HepG2 (cell line): ENCODE measurements at regions of chr20 and their contacts with region 1.

Region 1: DNA sequence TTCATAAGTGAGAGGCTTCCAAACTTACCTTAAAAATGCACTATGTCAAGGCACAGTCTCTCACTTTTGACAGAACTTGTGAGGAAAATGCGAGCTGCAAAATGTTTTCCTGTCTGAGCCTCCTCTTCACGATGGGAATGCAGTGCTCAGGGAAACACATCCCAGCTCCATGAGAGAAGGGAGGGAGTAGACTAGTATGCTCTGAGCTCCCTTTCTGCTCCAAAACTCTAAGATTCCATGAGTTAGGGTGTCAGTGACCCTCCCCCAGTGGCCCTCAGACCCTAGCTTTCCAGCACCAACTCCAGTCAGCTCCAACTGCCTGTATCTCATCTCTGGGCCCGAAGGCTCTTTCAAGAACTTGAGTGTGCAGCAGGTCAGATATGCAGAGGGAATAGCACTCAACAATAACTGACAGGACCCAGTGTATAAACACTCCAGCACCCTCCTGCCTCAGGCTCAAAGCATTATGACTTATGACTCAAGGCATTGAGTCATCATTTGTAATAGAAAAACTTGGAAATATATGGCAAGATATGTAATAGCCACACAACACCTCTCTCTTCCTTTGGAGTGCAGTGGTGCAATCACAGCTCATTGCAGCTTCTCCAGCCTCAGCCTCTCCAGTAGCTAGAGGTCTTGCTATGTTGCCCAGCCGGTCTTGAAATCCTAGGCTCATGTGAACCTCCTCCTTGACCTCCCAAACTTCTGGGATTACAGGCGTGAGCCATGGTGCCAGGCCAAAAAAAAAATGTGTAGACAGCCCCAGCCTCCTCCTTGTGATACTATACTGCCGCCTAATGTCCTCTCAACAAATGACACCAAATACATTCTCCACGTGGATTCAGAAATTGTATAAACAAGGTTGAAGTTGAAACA is 16.7 kb upstream of the ENTPD6 start:
- DNase-seq: peak; percentile 67
- ATAC-seq: peak; percentile 79
- H3K4me3 ChIP-seq: no peak overlapping the region
- H3K27ac ChIP-seq: no peak overlapping the region
- H3K4me1 ChIP-seq: peaks cover 47% of the 10 kb centered on the region
- H3K27me3 ChIP-seq: no peaks in the 10 kb centered on the region
- CTCF ChIP-seq: peak; percentile 98
- EP300 ChIP-seq: no peak
- POLR2A ChIP-seq: no peak
- RAD21 ChIP-seq: peak; percentile 97

Region 2: DNA sequence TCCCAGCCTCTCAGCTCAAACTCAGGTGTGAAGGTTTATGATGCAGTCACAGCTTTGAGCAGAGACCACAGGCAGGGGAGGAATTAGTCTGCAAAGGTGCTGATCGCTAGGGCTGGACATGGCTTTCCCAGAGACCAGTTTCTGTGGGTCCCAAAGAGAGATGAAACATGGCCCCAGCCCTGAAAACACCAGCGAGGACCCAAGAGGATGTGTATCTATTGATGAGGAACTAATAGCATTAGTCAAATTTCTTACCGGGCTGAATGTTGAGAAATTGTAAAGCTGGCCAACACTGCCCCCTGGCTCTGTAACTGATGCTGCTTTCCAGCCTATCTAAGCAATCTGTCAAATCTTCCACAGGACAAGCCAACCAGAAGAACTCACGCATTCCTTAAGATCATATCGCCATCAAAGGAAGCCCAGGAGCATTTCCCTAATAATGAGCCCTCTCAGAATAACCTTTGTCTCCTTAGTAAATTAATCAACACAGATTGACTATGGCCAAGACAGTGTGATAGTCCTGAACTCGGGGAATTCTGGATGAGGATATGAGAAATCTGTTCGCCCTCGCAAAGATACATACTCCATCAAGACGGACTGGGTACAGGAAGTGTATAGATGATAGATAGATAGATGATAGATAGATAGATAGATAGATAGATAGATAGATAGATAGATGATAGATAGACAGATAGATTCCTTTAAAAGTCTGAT is 113.0 kb before region 1 on chr20:
- CTCF ChIA-PET with region 1: interaction called, 5 read pairs
- POLR2A ChIA-PET with region 1: no interaction called
- in situ Hi-C with region 1: no loop called
- intact Hi-C with region 1: loop called (anchors 1 kb)
- DNase-seq: peak; percentile 65
- ATAC-seq: peak; percentile 64
- H3K4me3 ChIP-seq: peak overlapping the region in 2 of 3 experiments; percentile 1 to 24; a peak in 1 of 6 replicates
- H3K27ac ChIP-seq: no peak overlapping the region
- H3K4me1 ChIP-seq: peaks cover 63% of the 10 kb centered on the region
- H3K27me3 ChIP-seq: peaks cover 0 to 6% of the 10 kb centered on the region in 2 experiments; a peak in 3 of 5 replicates
- CTCF ChIP-seq: peak; percentile 91
- EP300 ChIP-seq: no peak
- POLR2A ChIP-seq: no peak
- RAD21 ChIP-seq: peak; percentile 96

Region 3: GRCh38 chr20:25076731-25077609 is 101.8 kb before region 1 on chr20:
- CTCF ChIA-PET with region 1: no interaction called
- POLR2A ChIA-PET with region 1: no interaction called
- in situ Hi-C with region 1: loop called (anchors 5 kb)
- intact Hi-C with region 1: no loop called
- DNase-seq: peak; percentile 82
- ATAC-seq: peak; percentile 79
- H3K4me3 ChIP-seq: peak overlapping the region; percentile 22 to 65 (median 30); a peak in 5 of 6 replicates
- H3K27ac ChIP-seq: no peak overlapping the region
- H3K4me1 ChIP-seq: peaks cover 25% of the 10 kb centered on the region
- H3K27me3 ChIP-seq: peaks cover 10 to 70% of the 10 kb centered on the region in 2 experiments; a peak in 4 of 5 replicates
- CTCF ChIP-seq: peak; percentile 75
- EP300 ChIP-seq: 0 out of 4 replicates have a peak, but pooled peaks of 1 of the 2 experiments have one; percentile 26
- POLR2A ChIP-seq: no peak
- RAD21 ChIP-seq: peak; percentile 64

Region 4: DNA sequence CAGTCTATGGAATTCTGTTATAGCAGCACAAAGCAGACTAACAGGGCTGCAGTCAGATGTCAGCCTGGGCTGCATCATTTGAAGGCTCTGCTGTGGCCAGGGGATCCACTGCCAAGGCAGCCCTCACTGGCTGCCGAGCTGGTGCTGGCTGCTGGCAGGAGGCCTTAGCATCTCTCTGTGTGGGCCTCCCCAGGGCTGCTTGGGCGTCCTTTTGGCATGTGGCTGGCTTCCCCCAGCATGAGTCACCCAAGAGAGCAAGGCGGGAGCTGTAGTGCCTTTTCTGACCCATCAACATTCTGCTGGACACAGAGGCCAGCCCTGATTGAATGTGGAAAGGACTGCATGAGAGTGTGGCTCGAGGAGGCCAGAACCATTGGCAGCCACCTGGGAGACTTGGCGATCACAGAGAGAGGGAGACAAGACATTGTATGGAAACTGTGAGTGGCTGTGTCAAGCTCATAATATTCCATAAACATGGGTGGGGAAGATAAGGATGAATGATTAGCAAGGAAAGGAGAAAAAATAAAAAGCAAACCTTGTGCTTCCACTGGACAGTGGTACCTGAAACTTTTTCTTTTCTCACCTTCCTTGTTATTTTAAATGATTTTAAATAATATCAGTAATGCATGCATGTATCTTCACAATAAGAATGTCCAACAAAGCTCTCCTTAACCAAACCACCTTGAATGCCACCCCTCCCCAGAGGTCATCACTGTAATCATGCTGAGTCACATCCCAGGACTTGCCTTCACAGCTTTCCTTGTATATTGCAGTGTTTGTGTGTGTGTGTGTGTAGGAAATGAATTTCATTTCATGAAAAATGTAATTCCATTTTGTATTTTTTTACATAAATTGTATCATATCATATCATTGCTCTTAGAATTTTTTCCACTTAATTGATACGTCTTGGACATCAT is 41.9 kb before region 1 on chr20:
- CTCF ChIA-PET with region 1: interaction called, 117 read pairs
- POLR2A ChIA-PET with region 1: interaction called, 3 read pairs
- in situ Hi-C with region 1: loop called (anchors 5 kb)
- intact Hi-C with region 1: loop called (anchors 1 kb)
- DNase-seq: no peak
- ATAC-seq: no peak; the same call in 2 of the 3 replicates
- H3K4me3 ChIP-seq: no peak overlapping the region
- H3K27ac ChIP-seq: no peak overlapping the region
- H3K4me1 ChIP-seq: no peaks in the 10 kb centered on the region
- H3K27me3 ChIP-seq: peaks cover 4 to 63% of the 10 kb centered on the region in 2 experiments; a peak in 4 of 5 replicates
- CTCF ChIP-seq: no peak
- EP300 ChIP-seq: no peak
- POLR2A ChIP-seq: no peak
- RAD21 ChIP-seq: no peak

Region 5: GRCh38 chr20:25165128-25165527 is 13.7 kb before region 1 on chr20:
- CTCF ChIA-PET with region 1: no interaction called
- POLR2A ChIA-PET with region 1: interaction called, 24 read pairs
- in situ Hi-C with region 1: no loop called
- intact Hi-C with region 1: no loop called
- DNase-seq: no peak
- ATAC-seq: no peak
- H3K4me3 ChIP-seq: no peak overlapping the region
- H3K27ac ChIP-seq: no peak overlapping the region
- H3K4me1 ChIP-seq: peaks cover 23% of the 10 kb centered on the region
- H3K27me3 ChIP-seq: no peaks in the 10 kb centered on the region; a peak in 1 of 5 replicates
- CTCF ChIP-seq: no peak
- EP300 ChIP-seq: no peak
- POLR2A ChIP-seq: no peak
- RAD21 ChIP-seq: no peak